Activated CD4-positive, alpha-beta T cell treated with anti-CD3 and anti-CD28 coated beads, Interleukin-2, amount 10 ng/mL, durations not matched to agents 7 days and 5 days (primary cell): ENCODE measurements at regions of chr17 and their contacts with region 1.

Region 1: GRCh38 chr17:75904749-75905521 is at the start of gene MRPL38:
- DNase-seq: peak; percentile 95
- H3K4me3 Mint-ChIP-seq: peak within 1 kb of the TSS; percentile 85
- H3K27ac Mint-ChIP-seq: peak within 1 kb of the TSS; percentile 94
- H3K4me1 Mint-ChIP-seq: peaks cover 20% of the 10 kb centered on the region
- H3K27me3 Mint-ChIP-seq: no peaks in the 10 kb centered on the region
- total RNA-seq, gene MRPL38: 95.9 to 97.5 TPM

Region 2: DNA sequence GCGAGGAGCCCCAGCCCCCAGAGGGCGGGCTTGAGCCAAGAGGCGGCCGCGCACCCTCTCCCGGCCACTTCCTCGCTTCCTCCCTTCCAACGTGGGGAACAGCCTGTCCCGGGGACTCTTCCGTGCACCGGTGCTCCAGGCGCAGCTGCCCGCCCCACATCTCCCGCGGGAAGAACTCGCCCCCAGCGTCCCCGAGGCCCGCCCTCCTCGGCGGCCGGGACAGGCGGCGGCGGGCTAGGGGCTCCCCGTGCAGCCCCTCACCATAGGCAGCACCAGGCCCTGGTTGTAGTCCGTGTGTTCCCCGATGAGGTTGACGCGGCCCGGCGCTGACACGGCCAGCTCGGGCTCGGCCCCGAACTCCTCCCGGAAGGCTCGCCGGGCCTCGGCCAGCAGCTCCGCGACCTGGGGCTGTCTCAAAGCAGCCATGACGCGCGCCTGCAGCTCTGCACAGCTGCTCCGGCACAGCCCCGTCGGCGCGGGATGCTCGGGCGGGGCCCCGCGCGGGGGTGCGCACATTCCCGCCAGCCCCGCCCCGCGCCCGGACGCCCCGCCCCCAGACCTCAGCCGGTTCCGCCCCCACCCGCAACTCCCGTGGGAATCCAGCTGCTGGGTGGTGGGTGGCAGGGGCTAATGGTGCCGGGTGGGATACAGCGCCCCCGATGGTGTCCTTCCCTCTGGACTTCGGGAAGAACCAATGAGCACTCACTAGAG is 140.1 kb before region 1 on chr17 and contains the start of gene GALK1:
- CTCF ChIA-PET with region 1: no interaction called
- POLR2A ChIA-PET with region 1: no interaction called
- DNase-seq: peak; percentile 76
- H3K4me3 Mint-ChIP-seq: peak within 1 kb of the TSS; percentile 77
- H3K27ac Mint-ChIP-seq: peak within 1 kb of the TSS; percentile 71
- H3K4me1 Mint-ChIP-seq: peaks cover 15% of the 10 kb centered on the region
- H3K27me3 Mint-ChIP-seq: no peaks in the 10 kb centered on the region
- total RNA-seq, gene GALK1: 40.9 to 44.7 TPM

Region 3: DNA sequence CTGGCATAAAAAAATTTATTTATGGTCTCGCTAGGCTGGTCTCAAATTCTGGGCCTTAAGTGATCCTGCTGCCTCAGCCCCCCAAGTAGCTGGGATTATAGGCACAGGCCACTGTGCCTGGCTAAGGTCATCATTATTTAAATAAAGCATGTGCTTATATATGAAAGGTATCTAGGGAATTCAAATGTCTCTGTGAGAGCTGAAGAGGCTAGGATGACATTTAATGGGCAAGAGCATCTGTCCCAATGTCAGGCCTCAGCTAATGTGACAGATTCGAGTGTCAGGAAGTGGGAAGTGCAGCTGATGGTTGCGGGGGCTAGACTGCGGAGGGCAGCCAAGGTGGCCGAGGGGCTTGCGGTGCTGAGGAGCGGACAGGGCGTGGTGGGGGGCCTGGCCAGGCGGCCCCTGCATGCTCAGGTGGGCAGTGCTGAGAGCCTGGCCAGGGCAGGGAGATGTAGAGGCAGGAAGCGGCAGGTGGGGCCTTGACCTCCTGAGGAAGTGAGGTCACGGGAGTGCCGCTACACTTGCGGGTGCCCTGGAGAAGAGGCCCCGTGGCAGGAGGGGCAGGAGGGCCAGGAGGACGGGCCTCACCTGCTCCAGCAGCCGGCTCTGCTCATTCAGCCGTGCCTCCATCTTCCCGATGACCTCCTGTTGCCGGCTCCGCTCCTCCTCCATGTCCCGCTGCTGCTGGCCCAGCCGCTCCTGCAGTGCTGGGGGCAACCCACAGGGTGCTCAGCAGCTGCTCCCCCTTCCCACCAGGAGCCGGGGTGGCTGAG is 12.4 kb after region 1 on chr17:
- CTCF ChIA-PET with region 1: interaction called, 28 read pairs
- POLR2A ChIA-PET with region 1: no interaction called
- DNase-seq: no peak
- H3K4me3 Mint-ChIP-seq: no peak overlapping the region
- H3K27ac Mint-ChIP-seq: no peak overlapping the region
- H3K4me1 Mint-ChIP-seq: peaks cover 3% of the 10 kb centered on the region
- H3K27me3 Mint-ChIP-seq: no peaks in the 10 kb centered on the region

Region 4: DNA sequence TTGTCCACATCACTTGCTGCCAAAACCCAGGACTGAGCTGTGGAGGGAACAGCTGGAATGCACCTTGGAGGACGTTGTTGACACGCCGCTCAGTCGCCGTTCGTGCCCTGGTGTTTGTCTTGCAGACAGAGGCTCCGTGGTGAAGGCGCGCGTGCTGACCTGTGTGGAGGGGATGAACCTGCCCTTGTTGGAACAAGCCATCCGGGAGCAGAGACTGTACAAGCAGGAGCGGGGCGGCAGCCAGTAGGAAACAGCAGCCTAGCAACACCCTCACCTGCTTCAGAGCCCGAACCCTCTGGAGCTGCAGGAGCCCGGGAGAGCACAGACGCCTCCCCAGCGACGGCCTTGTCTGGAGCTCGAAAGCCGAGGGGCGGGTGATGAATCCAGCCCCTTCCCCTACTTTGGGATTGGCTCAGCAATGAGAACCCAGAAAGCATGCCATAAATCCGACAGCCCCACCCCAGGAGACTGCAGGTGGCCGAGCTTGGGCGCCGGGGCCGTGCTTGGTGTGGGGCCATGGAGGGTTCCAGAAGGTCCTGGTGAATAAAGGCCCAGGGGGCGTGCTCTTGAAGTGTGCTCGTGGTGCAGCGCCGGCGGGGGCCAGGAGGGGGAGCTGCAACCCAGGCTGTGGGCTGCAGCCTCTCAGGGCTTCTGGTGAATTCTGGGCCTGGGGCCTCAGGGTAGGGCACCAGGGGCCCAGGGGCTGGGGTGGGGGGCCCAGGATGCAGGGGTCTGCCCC is 95.2 kb after region 1 on chr17:
- CTCF ChIA-PET with region 1: interaction called, 27 read pairs
- POLR2A ChIA-PET with region 1: interaction called, 3 read pairs
- DNase-seq: peak; percentile 71
- H3K4me3 Mint-ChIP-seq: no peak overlapping the region
- H3K27ac Mint-ChIP-seq: no peak overlapping the region
- H3K4me1 Mint-ChIP-seq: peaks cover 20% of the 10 kb centered on the region
- H3K27me3 Mint-ChIP-seq: no peaks in the 10 kb centered on the region

Region 5: DNA sequence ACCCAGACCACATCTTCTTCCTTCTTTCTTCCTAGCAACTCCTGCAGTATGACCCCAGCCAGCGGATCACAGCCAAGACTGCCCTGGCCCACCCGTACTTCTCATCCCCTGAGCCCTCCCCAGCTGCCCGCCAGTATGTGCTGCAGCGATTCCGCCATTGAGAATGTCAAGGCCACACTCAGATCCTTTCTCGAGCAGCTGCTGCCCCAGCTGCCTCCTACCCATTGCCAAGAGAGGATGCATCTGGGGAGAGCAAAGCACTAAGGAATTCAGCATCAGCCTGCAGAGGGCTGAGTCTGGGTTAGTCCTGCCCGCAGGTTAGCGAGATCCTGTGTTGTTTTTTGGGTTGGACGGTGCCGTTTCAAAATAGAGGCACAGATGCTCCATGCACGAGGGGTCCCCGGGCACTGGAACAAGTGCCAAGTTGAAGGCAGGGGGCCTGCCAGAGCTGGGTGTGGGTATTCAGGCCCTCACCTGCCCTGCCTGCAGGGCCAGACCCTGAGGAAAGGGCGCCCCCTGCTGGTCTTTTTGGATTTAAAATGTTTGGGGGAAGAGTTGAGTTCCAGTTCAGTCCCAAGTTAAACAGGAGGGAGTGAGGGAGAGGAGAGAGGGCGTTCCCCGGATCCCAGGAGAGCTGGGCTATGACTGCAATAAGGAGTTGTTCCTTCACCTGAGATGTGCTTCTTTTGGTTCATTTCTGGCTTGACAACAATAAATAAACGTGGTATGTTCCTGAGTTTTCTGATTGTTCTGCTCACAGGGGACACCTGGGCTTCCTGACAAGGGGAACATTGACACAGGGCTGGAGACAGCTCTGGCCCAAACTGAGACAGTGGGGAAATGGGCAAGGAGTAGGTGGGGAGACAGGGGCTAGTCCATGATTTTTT is 100.6 kb after region 1 on chr17:
- CTCF ChIA-PET with region 1: interaction called, 27 read pairs
- POLR2A ChIA-PET with region 1: no interaction called
- DNase-seq: peak; percentile 90
- H3K4me3 Mint-ChIP-seq: no peak overlapping the region
- H3K27ac Mint-ChIP-seq: no peak overlapping the region
- H3K4me1 Mint-ChIP-seq: peaks cover 2% of the 10 kb centered on the region
- H3K27me3 Mint-ChIP-seq: no peaks in the 10 kb centered on the region